Activated naive CD4-positive, alpha-beta T cell treated with anti-CD3 and anti-CD28 coated beads for 36 hours (primary cell): ENCODE measurements at regions of chr1 and their contacts with region 1.

Region 1: DNA sequence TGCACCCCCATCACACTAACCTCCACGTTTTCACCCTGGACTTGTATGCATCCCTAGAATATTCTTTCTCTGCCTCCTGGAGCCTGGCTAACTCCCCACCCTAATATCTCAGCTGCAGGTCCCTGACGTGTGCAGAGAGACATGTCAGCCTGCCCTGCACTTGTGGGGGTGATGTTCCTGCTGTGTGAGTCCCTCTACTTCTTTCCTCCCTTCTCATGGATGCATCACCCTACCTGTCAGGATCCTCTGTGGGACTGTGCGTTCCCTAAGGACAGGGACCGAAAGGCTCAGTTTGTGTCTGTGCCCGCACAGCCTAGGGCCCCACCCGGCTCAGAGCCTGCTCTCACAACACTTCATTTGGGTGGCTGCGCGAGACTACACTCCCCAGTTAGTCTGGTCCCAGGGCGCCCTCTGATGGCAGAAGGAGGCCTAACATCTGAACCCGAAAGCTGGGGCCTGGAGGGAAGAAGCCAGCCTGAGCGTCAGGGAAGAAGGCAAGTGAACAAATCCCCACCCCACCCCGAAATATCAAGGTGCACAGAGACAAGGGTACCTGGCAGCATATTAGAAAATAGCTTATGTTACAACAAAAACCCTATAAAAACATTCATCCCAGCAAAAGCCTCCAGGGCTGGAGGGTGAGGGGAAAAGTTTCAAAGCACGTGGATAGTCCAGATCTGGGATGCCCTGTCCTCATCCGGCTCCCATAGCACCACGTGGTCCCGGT is 3.7 kb downstream of the CD52 start:
- DNase-seq: peak; percentile 99
- H3K4me3 Mint-ChIP-seq: peak overlapping the region; percentile 65
- H3K27ac Mint-ChIP-seq: peak overlapping the region; percentile 90
- H3K4me1 Mint-ChIP-seq: peaks cover 44% of the 10 kb centered on the region
- H3K27me3 Mint-ChIP-seq: no peaks in the 10 kb centered on the region

Region 2: GRCh38 chr1:25879675-25880074 is 441.8 kb before region 1 on chr1:
- CTCF ChIA-PET with region 1: no interaction called
- intact Hi-C with region 1: no loop called
- DNase-seq: no peak
- H3K4me3 Mint-ChIP-seq: no peak overlapping the region
- H3K27ac Mint-ChIP-seq: no peak overlapping the region
- H3K4me1 Mint-ChIP-seq: peaks cover 6% of the 10 kb centered on the region
- H3K27me3 Mint-ChIP-seq: no peaks in the 10 kb centered on the region

Region 3: GRCh38 chr1:26102526-26102925 is 219.0 kb before region 1 on chr1:
- CTCF ChIA-PET with region 1: interaction called, 3 read pairs
- intact Hi-C with region 1: loop called (anchors 1 kb)
- DNase-seq: no peak
- H3K4me3 Mint-ChIP-seq: no peak overlapping the region
- H3K27ac Mint-ChIP-seq: no peak overlapping the region
- H3K4me1 Mint-ChIP-seq: peaks cover 4% of the 10 kb centered on the region
- H3K27me3 Mint-ChIP-seq: no peaks in the 10 kb centered on the region

Region 4: DNA sequence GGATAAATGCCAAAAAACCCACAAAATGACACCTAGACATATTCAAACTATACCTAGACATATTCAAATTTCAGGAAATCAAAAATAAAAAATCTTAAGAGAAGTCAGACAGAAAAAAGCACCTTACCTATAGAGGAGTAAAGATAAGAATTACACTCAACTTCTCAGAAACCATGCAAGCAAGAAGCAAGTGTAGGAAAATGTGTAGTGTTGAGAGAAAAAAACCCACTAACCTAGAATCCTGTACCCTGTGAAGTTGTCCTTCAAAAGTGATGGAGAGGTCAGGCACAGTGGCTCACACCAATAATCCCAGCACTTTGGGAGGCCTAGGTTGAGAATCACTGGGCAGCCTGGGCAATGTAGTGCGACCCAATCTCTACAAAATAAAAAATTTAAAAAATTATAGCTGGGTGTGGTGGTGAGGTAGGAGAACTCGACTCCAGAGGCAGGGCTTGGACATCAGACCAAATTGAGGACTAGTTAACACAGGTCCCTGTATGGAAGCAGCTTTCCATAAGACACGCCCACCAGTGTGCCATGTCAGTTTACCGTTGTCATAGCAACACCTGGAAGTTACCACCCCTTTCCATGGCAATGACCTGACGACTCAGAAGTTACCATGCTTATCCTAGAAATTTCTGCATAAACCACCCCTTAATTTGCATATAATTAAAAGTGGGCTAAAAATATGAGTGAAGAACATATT is 189.2 kb before region 1 on chr1:
- CTCF ChIA-PET with region 1: no interaction called
- intact Hi-C with region 1: no loop called
- DNase-seq: no peak
- H3K4me3 Mint-ChIP-seq: no peak overlapping the region
- H3K27ac Mint-ChIP-seq: peak overlapping the region; percentile 72
- H3K4me1 Mint-ChIP-seq: peaks cover 25% of the 10 kb centered on the region
- H3K27me3 Mint-ChIP-seq: no peaks in the 10 kb centered on the region

Region 5: DNA sequence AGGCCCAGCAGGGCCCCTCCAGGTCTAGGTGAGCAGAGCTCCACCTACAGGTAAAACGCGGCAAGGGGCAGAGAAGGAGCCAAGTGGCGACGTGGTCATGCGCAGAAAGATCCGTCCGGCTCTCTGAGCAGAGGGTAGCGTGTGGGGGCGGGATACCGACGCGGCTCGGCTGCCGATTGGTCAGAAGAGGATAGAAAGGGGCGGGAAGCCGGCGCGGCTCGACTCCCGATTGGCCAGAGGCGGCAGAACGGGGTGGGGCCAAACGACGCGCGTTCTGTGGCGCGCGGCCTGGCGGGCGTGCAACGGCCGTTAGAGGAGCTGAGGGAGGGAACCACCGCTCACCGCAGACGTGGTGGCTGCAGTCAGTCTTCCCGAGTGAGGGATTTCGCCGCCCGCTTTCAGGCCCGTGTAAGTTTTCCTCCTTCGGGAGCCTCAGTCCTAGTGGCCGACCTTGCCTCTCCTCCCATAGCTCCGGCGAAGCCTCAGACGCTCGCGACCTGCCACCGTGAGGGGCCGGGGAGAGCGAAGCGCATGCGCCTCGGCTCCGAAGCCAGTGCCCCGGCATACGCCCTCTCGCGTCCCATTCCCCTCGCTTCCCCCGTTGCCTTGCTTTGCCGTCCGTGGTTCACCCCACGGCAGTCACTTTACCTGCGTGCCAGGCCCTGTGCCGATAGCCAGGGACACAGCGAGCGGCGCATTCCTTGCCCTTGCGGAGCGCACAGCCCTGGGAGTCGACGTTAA is 87.4 kb before region 1 on chr1 and contains the start of gene CEP85:
- CTCF ChIA-PET with region 1: interaction called, 7 read pairs
- intact Hi-C with region 1: loop called (anchors 1 kb)
- DNase-seq: peak; percentile 99
- H3K4me3 Mint-ChIP-seq: peak within 1 kb of the TSS; percentile 94
- H3K27ac Mint-ChIP-seq: peak within 1 kb of the TSS; percentile 90
- H3K4me1 Mint-ChIP-seq: peaks cover 31% of the 10 kb centered on the region
- H3K27me3 Mint-ChIP-seq: no peaks in the 10 kb centered on the region
- total RNA-seq, gene CEP85: 45.7 to 47.0 TPM

Region 6: DNA sequence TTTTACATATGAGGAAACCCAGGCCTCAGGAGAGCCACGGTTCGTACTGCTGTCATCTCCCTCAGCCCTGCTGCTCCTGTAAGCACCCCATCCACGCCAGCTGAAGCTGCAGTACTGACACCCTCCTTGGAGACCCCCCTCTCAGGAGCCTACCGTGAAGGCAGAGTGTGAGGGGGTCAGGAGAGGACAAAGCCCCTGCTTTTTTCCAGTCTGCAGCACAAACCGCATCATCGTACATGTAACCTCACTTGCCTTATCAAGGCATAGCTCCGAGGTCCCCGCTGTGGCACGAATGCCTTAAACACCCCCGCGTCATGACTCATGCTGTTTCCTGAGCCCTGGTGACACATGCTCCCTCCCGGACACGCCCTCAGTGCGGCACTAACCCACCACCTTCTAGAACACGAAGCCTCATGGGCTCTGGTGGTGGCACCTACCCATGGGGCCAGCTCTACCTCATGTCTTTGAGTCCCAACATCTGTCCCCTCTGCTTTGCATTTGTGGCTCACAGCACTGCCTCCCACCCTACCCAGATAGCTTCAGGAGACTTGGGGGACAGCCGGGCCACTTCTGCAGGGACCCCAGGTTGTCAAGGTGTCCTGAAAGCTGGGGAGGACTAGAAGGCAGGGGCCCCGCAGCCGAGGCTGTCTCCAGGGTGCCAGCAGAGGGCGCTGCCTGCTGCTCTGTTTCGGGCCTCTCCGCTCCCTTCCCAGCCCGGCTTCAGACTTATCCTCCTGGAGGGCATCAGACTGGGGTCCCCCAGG is 36.7 kb before region 1 on chr1:
- CTCF ChIA-PET with region 1: interaction called, 210 read pairs
- intact Hi-C with region 1: loop called (anchors 1 kb)
- DNase-seq: peak; percentile 96
- H3K4me3 Mint-ChIP-seq: peak overlapping the region; percentile 36
- H3K27ac Mint-ChIP-seq: peak overlapping the region; percentile 92
- H3K4me1 Mint-ChIP-seq: peaks cover 88% of the 10 kb centered on the region
- H3K27me3 Mint-ChIP-seq: no peaks in the 10 kb centered on the region

Region 7: DNA sequence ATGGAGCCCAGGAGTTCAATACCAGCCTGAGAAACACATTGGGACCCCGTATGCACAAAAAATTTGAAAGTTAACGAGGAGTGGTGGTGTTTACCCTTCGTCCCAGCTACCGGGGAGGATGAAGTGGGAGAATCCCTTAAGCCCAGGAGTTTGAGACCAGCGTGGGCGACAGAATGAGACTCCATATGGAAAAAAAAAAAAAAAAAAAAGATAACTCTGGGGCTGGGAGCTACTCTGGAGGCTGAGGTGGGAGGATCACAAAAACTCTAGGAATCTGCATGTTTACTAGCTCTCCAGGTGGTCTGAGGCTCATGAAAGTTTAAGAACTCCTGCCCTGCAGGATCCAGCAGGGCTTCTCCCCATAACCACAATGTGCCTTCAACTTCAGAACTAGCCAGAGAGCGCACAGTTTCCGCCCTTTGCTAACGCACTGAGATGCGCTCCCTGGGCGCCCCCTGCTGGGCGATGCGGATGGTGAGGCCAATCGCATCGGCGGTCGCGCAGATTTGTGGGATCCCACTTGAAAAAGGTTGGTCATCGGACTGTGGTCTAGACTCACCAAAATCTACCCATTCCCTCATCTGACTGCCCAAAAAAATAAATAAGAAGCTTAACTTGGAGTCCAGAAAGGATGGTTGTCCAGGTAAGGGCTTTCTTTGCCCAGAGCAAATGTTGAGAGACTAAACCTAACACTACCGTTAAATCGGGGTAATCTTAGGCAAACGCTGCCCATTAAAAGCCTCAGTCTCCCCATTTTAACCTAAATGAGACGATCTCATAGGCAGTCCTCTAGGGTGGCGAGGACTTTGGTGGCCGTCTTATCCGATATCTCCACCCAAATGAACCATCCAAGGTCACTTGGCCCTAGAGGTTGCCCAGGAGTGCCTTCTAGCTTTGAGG is 42.3 kb after region 1 on chr1:
- CTCF ChIA-PET with region 1: interaction called, 7 read pairs
- intact Hi-C with region 1: loop called (anchors 5 kb)
- DNase-seq: peak; percentile 90
- H3K4me3 Mint-ChIP-seq: no peak overlapping the region
- H3K27ac Mint-ChIP-seq: no peak overlapping the region
- H3K4me1 Mint-ChIP-seq: peaks cover 32% of the 10 kb centered on the region
- H3K27me3 Mint-ChIP-seq: peaks cover 6% of the 10 kb centered on the region